ENCODE measurements at regions of chr19 and their contacts with region 1.

Region 1: DNA sequence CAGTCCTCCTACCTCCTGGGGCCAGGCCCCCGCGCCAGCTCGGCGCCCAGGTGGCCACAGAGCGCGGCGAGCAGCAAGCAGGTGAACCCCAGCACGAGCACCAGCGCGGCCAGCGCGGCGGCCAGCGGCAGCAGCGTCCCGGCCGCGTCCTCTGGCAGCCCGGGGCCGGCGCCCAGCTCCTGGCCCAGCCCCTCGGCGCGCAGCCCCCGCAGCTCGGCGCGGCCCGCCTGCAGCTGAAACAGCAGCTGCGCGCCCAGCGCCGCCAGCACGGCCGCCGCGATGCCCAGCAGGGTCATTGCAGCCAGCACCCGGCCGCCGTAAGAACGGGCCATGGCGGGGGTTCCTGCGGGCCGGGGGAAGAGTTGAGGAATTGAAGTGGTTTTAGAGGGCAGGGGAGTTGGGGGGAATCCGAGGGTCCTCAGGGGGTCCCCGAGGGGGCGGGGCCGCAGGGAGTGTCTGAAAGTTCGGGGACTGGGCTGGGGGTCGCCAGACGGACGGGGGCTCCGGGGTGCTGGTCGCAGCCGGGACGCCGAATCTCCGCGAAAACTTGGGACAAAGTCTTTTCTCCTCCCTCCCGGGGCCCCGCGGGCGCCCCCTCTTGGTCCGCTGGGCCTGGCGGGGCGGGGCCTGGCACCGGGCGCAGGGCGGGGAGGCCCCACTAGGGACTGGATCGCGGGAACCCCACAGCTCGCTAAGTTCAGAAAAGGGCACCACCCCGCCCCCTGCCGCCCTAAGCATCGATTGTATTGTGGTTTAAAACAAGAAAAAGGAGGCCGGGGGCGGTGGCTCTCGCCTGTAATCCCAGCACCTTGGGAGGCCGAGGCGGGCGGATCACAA is at the start of gene TMEM221:
- DNase-seq: peak; percentile 65 to 91 (median 84)
- ATAC-seq: peak; percentile 85
- H3K4me3 ChIP-seq: peak within 1 kb of the TSS; percentile 43
- H3K27ac ChIP-seq: no peak within 1 kb of the TSS
- H3K4me1 ChIP-seq: peaks cover 9 to 27% of the 10 kb centered on the region in 2 experiments; a peak in 4 of 5 replicates
- H3K27me3 ChIP-seq: peaks cover 0 to 10% of the 10 kb centered on the region in 2 experiments; a peak in 2 of 5 replicates
- CTCF ChIP-seq: peak; percentile 53 to 80 (median 69)
- EP300 ChIP-seq: no peak
- POLR2A ChIP-seq: no peak
- RAD21 ChIP-seq: peak; percentile 15 to 39; a peak in 2 of 4 replicates
- polyA plus RNA-seq, gene TMEM221: 0.06 TPM in 1 of 2 experiments, not detected in the other

Region 2: DNA sequence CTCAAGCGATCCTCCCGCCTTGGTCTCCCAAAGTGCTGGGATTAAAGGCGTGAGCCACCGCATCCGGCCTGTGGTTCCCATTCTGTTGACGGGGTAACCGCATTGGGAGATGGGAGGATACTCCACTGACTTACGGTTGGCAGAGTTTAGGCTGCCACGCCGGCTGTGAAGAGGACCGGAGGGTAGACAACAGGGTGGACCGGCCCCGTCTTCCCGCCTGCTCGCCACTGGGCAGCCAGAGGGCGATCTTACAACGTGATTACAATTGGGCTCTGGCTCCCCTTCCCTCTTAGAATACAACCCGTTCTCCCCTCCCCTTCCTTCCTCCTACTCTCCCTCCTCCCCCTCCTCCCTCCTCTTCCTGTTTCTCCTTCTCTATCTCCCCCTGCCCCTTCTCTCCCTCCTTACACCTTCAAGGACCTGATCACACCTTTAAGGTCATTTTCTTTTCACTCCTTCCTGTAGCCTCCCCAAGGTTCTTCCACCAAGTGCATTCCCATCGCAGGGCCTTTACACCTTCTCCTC is 53.4 kb before region 1 on chr19:
- CTCF ChIA-PET with region 1: interaction called, 3 read pairs
- POLR2A ChIA-PET with region 1: interaction called, 3 read pairs
- in situ Hi-C with region 1: no loop called
- intact Hi-C with region 1: loop called (anchors 2 kb)
- DNase-seq: peak; percentile 83 to 91 (median 85)
- ATAC-seq: peak; percentile 72
- H3K4me3 ChIP-seq: no peak overlapping the region
- H3K27ac ChIP-seq: no peak overlapping the region; the same call in 1 of the 3 replicates
- H3K4me1 ChIP-seq: peaks cover 30 to 50% of the 10 kb centered on the region in 2 experiments
- H3K27me3 ChIP-seq: no peaks in the 10 kb centered on the region
- CTCF ChIP-seq: peak; percentile 83 to 88 (median 85)
- EP300 ChIP-seq: peak; percentile 37; the same call in 1 of the 2 replicates
- POLR2A ChIP-seq: peak; percentile 47; the same call in 1 of the 2 replicates
- RAD21 ChIP-seq: peak; percentile 85 to 94

Region 3: DNA sequence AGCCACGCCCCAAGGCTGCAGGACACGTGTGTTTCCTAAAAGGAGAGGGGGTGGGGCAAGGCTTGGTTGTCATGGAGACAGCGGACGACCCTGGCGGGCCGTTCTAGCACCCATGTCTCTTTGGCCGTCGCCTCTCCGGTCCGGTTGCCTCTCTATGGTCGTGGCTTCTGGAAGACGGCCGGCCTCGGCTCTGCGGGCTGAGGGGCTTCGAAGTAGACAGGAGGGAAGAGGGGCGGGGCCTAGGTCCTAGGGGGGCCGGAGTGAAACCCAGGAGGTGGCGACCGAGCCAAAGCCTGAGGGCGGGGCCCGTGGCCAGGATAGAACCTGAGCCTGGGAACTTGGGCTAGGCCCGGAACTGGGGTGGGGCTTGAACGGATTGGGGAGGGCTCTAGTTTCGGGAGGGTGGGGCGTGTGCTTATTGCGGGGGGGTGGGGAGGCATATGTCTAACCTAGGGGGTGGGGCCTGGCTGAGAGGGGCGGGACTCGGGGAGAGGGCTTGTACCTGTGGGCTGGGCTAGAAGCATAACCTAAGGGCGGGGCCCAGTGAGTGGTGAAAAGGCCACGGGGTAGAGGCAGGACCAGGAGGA is 21.2 kb after region 1 on chr19:
- CTCF ChIA-PET with region 1: interaction called, 10 read pairs
- POLR2A ChIA-PET with region 1: interaction called, 4 read pairs
- in situ Hi-C with region 1: no loop called
- intact Hi-C with region 1: loop called (anchors 2 kb)
- DNase-seq: peak; percentile 92 to 98 (median 94)
- ATAC-seq: peak; percentile 84
- H3K4me3 ChIP-seq: peak overlapping the region; percentile 76
- H3K27ac ChIP-seq: peak overlapping the region; percentile 73
- H3K4me1 ChIP-seq: peaks cover 30 to 43% of the 10 kb centered on the region in 2 experiments
- H3K27me3 ChIP-seq: no peaks in the 10 kb centered on the region; a peak in 1 of 5 replicates
- CTCF ChIP-seq: no peak
- EP300 ChIP-seq: no peak
- POLR2A ChIP-seq: 0 out of 2 replicates have a peak, but pooled peaks have one; percentile 31
- RAD21 ChIP-seq: no peak

Region 4: GRCh38 chr19:17671906-17672305 is 223.6 kb after region 1 on chr19:
- CTCF ChIA-PET with region 1: no interaction called
- POLR2A ChIA-PET with region 1: no interaction called
- in situ Hi-C with region 1: no loop called
- intact Hi-C with region 1: loop called (anchors 10 kb)
- DNase-seq: peak; percentile 71 to 80 (median 77)
- ATAC-seq: peak; percentile 99
- H3K4me3 ChIP-seq: no peak overlapping the region
- H3K27ac ChIP-seq: no peak overlapping the region
- H3K4me1 ChIP-seq: peaks cover 0 to 2% of the 10 kb centered on the region in 2 experiments; a peak in 1 of 5 replicates
- H3K27me3 ChIP-seq: no peaks in the 10 kb centered on the region; a peak in 2 of 5 replicates
- CTCF ChIP-seq: no peak
- EP300 ChIP-seq: no peak
- POLR2A ChIP-seq: no peak
- RAD21 ChIP-seq: no peak